Psoas muscle (tissue), 8 donors: ENCODE measurements at regions of chr22 and their contacts with region 1.

Region 1: DNA sequence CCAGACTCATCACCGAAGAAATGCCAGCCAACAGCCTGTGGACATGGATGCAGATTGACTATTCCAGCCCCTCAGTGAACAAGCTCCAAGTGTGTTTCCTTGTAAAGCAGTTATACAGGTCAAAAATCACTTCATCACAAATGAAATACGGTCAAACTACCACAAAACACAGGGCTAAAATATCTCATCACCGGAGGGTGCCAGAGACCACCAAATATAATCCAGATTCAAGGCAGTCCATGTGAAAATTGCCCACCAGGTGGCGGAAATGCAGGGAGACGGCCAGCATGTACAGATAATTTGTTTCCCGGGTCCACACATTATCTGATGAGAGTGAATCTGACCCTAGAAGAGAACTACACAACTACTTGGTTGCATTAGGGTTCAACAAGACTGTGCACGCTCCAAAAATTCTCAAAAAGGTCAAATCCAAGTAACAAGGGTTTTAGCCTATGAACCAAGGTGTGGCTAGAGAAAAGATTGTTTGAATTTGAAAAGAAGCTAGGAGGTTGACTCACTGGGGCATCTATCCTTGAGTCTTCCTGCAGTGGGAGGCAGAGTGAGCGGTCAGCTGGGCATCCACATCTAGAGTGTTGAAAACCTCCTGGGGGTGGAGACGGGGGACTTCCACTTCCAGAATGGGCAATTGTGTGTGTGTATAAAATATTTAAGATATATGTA is 71.7 kb downstream of the IGLL5 start:
- DNase-seq: peak; percentile 57 to 79
- ATAC-seq: peak; percentile 55 to 80 (median 69)
- H3K4me3 ChIP-seq: no peak overlapping the region
- H3K27ac ChIP-seq: no peak overlapping the region
- H3K4me1 ChIP-seq: no peaks in the 10 kb centered on the region
- H3K27me3 ChIP-seq: peaks cover 0 to 10% (median 0%) of the 10 kb centered on the region in 3 donors
- CTCF ChIP-seq: peak; percentile 93

Region 2: DNA sequence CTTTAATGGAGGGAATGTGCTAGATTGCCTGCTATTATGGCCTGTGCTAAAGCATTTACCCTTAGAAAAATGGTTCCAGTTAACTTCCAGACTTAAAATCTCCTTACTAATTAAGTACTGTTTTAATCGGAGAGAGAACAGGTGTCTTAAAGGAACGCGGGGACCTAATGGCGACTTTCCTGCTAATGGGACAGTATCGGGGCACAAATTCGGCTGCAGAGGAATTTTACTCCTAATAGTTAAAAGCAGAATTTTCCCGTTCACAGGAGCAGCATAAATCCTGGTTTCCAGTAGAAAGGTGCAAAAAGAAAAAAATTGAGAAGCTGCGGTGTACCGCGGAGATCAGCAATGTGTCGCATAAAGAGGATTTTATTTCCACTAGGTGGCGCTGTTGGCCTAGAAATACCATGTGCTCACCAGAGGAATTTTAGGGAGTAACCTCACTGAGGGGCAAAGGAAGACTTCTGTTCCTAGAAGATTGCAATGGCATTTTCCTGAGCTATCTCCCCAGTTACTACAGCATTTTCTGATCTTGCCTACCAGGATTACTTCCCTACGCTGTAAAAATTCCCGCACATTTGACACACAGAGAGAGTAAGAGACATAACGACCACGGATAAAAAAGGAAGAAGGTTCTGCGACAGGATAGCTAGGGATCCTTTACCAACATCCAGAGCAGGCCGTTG is 495.3 kb before region 1 on chr22:
- intact Hi-C with region 1: loop called (anchors 10 kb)
- DNase-seq: no peak
- ATAC-seq: peak in 3 of 4 donors; percentile 49 to 67 (median 62)
- H3K4me3 ChIP-seq: no peak overlapping the region
- H3K27ac ChIP-seq: no peak overlapping the region
- H3K4me1 ChIP-seq: no peaks in the 10 kb centered on the region
- H3K27me3 ChIP-seq: peaks cover 7 to 26% (median 12%) of the 10 kb centered on the region in 3 donors
- CTCF ChIP-seq: peak; percentile 69

Region 3: DNA sequence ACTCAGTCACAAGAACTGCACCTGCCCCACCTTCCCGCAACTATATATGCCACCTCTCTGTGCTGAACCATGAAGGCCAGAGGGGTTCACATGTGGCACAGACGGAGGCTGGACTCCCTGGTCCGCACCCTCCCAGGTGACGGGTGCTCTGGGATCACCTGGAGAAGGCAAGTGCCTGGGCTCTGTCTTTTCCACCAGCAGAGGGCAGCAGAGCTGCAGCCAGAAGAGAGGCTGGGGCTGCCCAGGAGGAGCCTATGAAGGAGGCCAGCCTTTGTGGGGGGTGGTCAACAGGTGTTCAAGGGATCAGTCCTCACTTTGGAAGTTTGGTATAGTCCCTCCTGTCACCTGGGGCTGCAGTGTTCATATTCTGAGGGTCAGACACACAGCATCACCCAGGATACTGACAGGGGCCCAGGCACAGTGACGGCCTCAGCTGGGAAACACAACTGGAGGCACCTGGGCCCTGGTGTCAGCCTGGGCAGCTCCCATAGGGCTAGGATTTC is 110.9 kb before region 1 on chr22:
- intact Hi-C with region 1: loop called (anchors 2 to 5 kb)
- DNase-seq: peak; percentile 47 to 62
- ATAC-seq: peak; percentile 55 to 73 (median 64)
- H3K4me3 ChIP-seq: no peak overlapping the region
- H3K27ac ChIP-seq: no peak overlapping the region
- H3K4me1 ChIP-seq: no peaks in the 10 kb centered on the region
- H3K27me3 ChIP-seq: peaks cover 0 to 16% (median 0%) of the 10 kb centered on the region in 3 donors
- CTCF ChIP-seq: peak; percentile 76

Region 4: DNA sequence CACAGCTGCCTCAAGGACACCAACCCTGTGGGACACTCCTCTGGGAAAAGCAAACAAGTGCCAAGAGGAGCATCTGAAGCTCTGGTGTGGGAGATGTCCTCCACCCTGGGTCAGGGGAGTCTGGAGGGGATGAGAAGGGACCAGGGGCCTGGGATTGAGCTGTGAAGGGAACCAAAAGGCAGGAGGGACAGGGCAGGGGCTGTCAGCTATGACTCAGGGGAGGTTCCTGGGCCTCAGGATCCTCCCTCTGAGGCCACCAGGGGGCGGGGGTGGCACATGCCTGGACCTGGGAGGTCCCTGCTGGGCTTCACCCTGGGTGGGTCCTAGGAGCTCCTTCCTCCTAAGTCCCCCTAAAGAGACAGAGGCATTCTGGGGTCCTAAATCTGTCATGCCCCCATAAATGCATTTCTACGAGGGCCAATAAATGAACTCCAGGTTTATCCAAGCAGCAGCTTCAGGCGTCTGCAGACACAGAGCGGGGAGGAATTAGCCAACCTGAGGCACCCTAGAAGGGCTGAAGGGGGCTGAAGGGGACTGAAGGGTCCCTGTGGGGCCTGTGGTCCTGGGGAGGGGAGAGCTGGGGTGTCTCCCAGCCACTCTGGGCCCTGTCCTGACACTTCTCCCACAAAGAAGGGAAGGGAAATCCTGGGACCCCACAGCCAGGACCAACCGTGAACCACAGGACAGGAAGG is 103.5 kb before region 1 on chr22:
- intact Hi-C with region 1: loop called in 1 of 2 experiments (anchors 5 kb)
- DNase-seq: no peak
- ATAC-seq: no peak
- H3K4me3 ChIP-seq: no peak overlapping the region
- H3K27ac ChIP-seq: no peak overlapping the region
- H3K4me1 ChIP-seq: no peaks in the 10 kb centered on the region
- H3K27me3 ChIP-seq: peaks cover 0 to 41% (median 6%) of the 10 kb centered on the region in 3 donors
- CTCF ChIP-seq: no peak

Region 5: DNA sequence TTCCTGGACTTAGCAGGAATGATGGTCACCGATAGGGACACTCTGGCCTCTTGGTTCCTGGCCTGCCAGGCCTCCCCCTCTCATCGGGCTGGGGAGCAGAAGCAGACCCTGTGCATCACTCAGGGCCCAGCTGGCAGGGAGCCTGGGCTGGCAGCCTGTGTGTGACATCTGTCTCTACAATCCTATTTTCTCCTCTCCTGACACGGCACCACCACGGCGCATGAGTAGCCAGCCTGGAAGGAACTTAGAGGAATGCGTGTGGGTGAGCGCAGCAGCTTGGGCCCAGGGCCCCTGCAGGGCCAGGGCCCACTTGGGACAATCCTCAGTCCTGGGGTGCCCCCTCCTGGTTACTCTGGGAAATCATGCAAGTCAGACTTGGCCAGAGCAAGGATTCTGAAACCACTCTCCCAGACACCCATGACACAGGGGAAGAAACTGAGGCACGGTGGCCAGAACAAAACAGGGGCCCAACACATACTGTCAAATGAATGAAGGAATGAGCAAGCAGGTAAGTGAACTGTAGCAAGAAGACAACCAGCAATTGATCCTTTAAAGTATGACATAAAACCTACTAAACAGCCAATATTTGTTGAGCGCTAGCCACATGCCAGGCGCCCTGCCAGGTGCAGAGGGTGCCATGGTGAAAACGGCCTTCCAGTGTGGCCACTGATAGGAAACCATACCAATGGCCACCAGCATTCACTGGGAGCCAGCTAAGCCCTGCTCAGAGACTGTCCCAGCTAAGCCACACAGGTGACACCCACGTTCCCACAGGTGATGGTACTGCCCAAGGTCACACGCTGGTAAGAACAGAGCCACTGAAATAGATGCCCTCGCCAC is 169.2 kb after region 1 on chr22:
- intact Hi-C with region 1: loop called (anchors 1 to 2 kb)
- DNase-seq: peak; percentile 57 to 76
- ATAC-seq: peak; percentile 76 to 89 (median 84)
- H3K4me3 ChIP-seq: no peak overlapping the region
- H3K27ac ChIP-seq: no peak overlapping the region
- H3K4me1 ChIP-seq: no peaks in the 10 kb centered on the region
- H3K27me3 ChIP-seq: no peaks in the 10 kb centered on the region
- CTCF ChIP-seq: peak; percentile 81

Region 6: GRCh38 chr22:23281406-23282088 is 322.3 kb after region 1 on chr22:
- intact Hi-C with region 1: loop called in 1 of 2 experiments (anchors 5 kb)
- DNase-seq: peak; percentile 76 to 90
- ATAC-seq: peak; percentile 81 to 93 (median 86)
- H3K4me3 ChIP-seq: no peak overlapping the region
- H3K27ac ChIP-seq: no peak overlapping the region
- H3K4me1 ChIP-seq: no peaks in the 10 kb centered on the region
- H3K27me3 ChIP-seq: no peaks in the 10 kb centered on the region
- CTCF ChIP-seq: peak; percentile 96

Region 7: DNA sequence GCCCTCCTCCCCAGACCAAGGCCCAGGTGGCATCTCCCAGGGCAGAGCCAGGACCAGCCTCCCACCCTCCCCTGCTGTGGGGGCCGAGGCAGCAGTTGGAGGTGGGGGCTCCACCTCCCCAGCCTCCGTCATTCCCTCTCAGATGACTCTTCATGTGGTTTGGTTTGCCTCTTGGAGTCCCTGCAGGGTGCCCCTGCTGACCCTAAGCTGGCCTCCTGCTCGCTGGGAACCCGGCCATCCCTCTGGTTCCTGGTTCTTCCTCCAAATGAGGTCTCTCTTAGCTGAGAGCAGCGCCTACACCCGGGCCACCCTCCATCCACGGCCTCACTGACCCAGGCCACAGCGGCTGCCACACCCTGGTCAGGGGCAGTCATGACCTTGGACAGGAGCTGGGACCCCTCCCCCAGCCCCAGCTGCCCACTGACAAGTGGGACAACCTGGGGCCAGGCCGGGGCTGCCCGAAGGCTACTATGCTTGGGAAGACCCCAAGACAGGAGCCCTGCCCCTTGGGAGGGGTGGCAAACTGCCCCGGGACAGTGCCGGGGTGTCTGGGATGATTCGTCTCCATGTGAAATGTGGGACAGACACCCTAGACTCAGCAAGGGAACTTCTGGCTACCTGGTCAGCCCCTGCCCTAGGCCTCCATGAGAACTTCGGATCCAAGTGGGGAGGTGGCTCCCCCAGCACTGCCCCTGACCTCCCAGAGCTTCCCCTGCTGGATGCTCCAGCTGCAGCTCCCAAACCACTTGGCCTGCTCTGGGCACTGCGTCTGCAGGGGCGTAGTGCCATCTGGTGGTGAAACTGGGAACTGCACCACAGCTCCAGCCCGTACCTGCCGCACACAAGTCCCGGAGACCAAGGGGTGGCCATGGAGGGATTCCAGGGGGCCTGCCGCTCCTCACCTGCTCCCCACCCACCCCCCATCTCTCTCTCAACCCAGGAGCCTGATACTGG is 426.3 kb after region 1 on chr22:
- intact Hi-C with region 1: loop called (anchors 2 to 10 kb)
- DNase-seq: peak; percentile 75 to 85
- ATAC-seq: peak; percentile 81 to 93 (median 89)
- H3K4me3 ChIP-seq: no peak overlapping the region
- H3K27ac ChIP-seq: no peak overlapping the region
- H3K4me1 ChIP-seq: no peaks in the 10 kb centered on the region
- H3K27me3 ChIP-seq: peaks cover 0 to 2% (median 0%) of the 10 kb centered on the region in 3 donors
- CTCF ChIP-seq: peak; percentile 98